ENCODE measurements at regions of chr6 and their contacts with region 1.

Region 1: DNA sequence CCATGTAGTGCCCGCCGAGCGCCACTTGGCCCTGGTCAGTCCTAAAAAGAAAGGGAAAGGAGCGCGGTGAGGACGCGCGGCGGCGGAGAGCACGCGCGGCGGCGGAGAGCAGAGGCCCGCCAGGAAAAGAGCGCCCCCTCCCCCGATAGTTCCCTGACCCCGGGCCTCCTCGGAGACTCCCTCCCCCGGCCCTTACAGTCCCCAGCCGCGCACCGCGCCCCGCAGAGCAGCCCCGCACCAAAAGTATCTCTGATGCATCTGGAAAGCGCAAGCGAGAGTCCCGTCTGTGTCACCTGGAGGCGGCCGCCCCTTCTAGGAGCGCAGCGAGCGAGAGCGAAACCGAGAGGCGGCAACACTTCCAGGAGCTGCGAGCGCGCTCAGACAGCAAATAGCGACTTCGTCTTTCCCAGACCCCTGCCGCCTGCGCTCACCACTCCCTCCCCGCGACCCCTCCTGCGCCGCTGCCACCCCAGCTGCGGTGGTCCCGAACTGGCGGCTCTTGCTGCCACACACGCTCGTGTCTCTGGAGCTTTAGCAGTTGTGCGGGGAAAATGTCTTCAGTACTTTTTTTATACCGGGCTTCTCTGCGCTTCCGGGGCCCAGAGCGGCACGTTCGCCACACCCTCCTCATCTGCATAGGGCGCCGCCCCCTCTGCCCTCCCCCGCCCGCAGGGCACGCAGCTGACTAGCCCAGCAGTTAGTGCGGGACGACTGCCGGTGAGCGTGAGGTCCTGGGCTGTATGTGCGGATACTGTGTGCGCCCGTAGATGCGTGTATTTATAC is at the start of gene TENT5A:
- DNase-seq: peak; percentile 91
- H3K4me3 ChIP-seq: peak within 1 kb of the TSS; percentile 79 to 96
- H3K27ac ChIP-seq: peak within 1 kb of the TSS; percentile 87 to 97
- H3K4me1 ChIP-seq: peaks cover 0 to 14% of the 10 kb centered on the region in 2 experiments; a peak in 2 of 4 replicates
- H3K27me3 ChIP-seq: no peaks in the 10 kb centered on the region
- CTCF ChIP-seq: peak; percentile 39
- EP300 ChIP-seq: no peak; a peak in 1 of 4 replicates
- RAD21 ChIP-seq: no peak; the same call in 1 of the 2 replicates
- polyA plus RNA-seq, gene TENT5A: 4.9 and 5.0 TPM in 2 replicates

Region 2: GRCh38 chr6:80605165-80605989 is 1147.0 kb before region 1 on chr6:
- CTCF ChIA-PET with region 1: interaction called, 22 read pairs
- POLR2A ChIA-PET with region 1: no interaction called
- DNase-seq: peak; percentile 21
- H3K4me3 ChIP-seq: peak overlapping the region in 1 of 2 experiments; percentile 6; a peak in 1 of 4 replicates
- H3K27ac ChIP-seq: peak overlapping the region in 1 of 2 experiments; percentile 32; a peak in 2 of 4 replicates
- H3K4me1 ChIP-seq: peaks cover 4 to 22% of the 10 kb centered on the region in 2 experiments; a peak in 3 of 4 replicates
- H3K27me3 ChIP-seq: no peaks in the 10 kb centered on the region
- CTCF ChIP-seq: peak; percentile 76
- EP300 ChIP-seq: no peak
- RAD21 ChIP-seq: peak; percentile 81

Region 3: DNA sequence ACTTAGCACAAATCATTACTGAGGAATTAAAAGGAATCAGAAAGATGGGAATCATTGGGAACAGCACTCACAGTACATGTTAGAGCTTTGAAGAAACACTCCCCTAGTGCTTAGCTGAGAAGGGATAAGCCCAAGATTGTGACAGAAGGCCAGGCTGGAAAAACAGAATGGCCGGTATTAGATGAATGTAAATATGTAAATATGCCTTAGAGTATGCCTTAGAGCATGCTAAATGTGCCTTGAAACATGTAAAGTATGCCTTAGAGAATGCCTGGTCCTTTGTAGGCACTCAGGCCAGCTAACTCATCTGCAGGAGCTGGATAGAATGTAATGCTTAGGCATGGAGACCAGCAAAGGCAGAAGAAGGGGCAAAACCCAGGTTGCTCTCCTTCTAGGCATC is 10.7 kb after region 1 on chr6:
- CTCF ChIA-PET with region 1: interaction called, 13 read pairs
- POLR2A ChIA-PET with region 1: interaction called, 3 read pairs
- DNase-seq: no peak
- H3K4me3 ChIP-seq: no peak overlapping the region
- H3K27ac ChIP-seq: peak overlapping the region in 1 of 2 experiments; percentile 78; a peak in 1 of 4 replicates
- H3K4me1 ChIP-seq: peaks cover 27 to 50% of the 10 kb centered on the region in 2 experiments
- H3K27me3 ChIP-seq: no peaks in the 10 kb centered on the region
- CTCF ChIP-seq: no peak
- EP300 ChIP-seq: no peak
- RAD21 ChIP-seq: no peak

Region 4: GRCh38 chr6:82616386-82617028 is 864.2 kb after region 1 on chr6:
- CTCF ChIA-PET with region 1: no interaction called
- POLR2A ChIA-PET with region 1: no interaction called
- DNase-seq: no peak
- H3K4me3 ChIP-seq: no peak overlapping the region
- H3K27ac ChIP-seq: no peak overlapping the region
- H3K4me1 ChIP-seq: peaks cover 0 to 16% of the 10 kb centered on the region in 2 experiments; a peak in 2 of 4 replicates
- H3K27me3 ChIP-seq: no peaks in the 10 kb centered on the region
- CTCF ChIP-seq: peak; percentile 39
- EP300 ChIP-seq: no peak
- RAD21 ChIP-seq: peak; percentile 53